Gastrocnemius medialis (tissue), 4 donors: ENCODE measurements at regions of chr3 and their contacts with region 1.

Region 1: GRCh38 chr3:48685602-48686511 is at the start of gene NCKIPSD:
- DNase-seq: peak; percentile 66 to 82
- ATAC-seq: peak; percentile 92 to 95
- H3K4me3 ChIP-seq: peak within 1 kb of the TSS; percentile 69 to 96 (median 84)
- H3K27ac ChIP-seq: peak within 1 kb of the TSS; percentile 73 to 92 (median 90)
- H3K4me1 ChIP-seq: peaks cover 30 to 36% of the 10 kb centered on the region in 2 donors
- H3K27me3 ChIP-seq: no peaks in the 10 kb centered on the region
- CTCF ChIP-seq: peak; percentile 64 to 96 (median 90)
- POLR2A ChIP-seq: peak; percentile 62 to 77
- total RNA-seq, gene NCKIPSD: 13.2 to 33.1 (median 19.4) TPM

Region 2: GRCh38 chr3:48565591-48566400 is 120.1 kb before region 1 on chr3:
- in situ Hi-C with region 1: no loop called
- intact Hi-C with region 1: no loop called
- DNase-seq: no peak
- ATAC-seq: no peak
- H3K4me3 ChIP-seq: no peak overlapping the region
- H3K27ac ChIP-seq: no peak overlapping the region
- H3K4me1 ChIP-seq: peaks cover 5% of the 10 kb centered on the region in 2 donors
- H3K27me3 ChIP-seq: no peaks in the 10 kb centered on the region
- CTCF ChIP-seq: no peak
- POLR2A ChIP-seq: no peak

Region 3: DNA sequence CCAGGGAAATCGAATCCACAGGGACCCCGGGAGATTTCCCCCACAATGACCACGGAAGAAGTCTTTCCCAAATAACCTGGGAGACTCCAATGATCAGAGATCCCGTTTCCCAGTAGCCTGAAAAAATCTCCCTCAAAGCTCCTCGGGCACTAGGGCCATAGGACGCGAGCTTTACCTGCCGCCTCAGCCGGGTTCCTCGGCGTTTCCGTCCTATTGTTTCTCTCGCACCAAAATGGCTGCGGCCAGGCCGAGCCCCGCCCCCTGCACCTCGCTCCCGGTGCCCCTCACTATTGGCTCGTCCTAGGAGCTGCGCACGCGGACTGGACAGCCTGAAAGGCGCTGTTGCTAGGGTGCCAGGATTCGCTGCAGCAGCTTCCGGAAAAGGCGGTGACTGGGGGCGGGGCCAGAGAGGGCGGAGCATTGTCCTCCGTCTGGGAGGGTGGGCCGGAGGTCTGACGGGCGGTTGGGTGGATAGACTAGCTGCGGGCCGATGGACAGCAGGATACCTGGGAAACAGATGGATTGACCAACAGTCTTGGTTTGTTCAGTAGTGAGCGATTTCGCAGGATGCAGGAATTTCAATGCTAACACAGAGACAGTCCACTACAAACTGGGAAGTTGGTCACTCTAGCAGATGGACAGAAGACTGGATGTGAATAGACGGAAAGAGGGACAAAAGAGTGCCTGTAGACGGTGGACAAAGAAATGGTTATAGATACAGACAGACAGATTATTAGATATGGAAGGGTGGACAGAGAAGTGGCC is 31.3 kb after region 1 on chr3 and contains the start of gene IP6K2:
- in situ Hi-C with region 1: no loop called
- intact Hi-C with region 1: loop called (anchors 2 kb)
- DNase-seq: peak; percentile 98
- ATAC-seq: peak; percentile 98
- H3K4me3 ChIP-seq: peak within 1 kb of the TSS; percentile 75 to 92 (median 80)
- H3K27ac ChIP-seq: peak within 1 kb of the TSS; percentile 79 to 89 (median 83)
- H3K4me1 ChIP-seq: peaks cover 20 to 33% of the 10 kb centered on the region in 2 donors
- H3K27me3 ChIP-seq: no peaks in the 10 kb centered on the region
- CTCF ChIP-seq: no peak
- POLR2A ChIP-seq: peak; percentile 48 to 75
- total RNA-seq, gene IP6K2: 16.9 to 31.8 (median 22.0) TPM

Region 4: DNA sequence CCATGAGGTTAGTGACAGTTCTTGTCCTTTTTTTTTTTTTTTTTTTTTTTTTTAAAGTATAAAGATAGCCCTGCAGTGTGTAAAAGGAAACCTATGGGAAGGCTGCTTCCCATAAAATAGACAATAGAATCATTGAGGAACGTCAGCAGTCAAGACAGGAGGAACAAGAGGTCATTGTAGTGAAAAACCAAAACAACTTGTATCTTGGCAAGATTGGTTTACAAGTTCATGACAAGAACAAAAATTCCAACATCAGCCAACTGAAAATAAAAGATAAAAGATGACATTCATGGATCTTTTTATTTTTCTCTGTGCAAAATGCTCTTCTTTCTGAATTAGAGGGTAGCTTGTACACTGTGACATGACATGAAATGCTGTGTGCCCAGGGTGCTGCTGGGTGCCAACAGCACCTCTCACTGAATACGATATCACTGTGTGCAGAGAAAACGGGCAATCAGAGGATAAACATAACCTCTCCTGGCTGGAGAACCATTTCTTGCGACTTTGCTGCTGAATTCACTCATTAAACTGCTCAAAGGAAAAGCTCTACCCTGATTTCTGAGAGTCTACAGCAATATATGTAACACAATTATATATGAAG is 61.3 kb after region 1 on chr3:
- in situ Hi-C with region 1: no loop called
- intact Hi-C with region 1: no loop called
- DNase-seq: no peak
- ATAC-seq: peak in 1 of 2 donors; percentile 21
- H3K4me3 ChIP-seq: no peak overlapping the region
- H3K27ac ChIP-seq: peak overlapping the region; percentile 65 to 87 (median 70)
- H3K4me1 ChIP-seq: peaks cover 37 to 49% of the 10 kb centered on the region in 2 donors
- H3K27me3 ChIP-seq: no peaks in the 10 kb centered on the region
- CTCF ChIP-seq: no peak
- POLR2A ChIP-seq: no peak